Activated B cell treated with CpG ODN at 0.5 μM for 24 hours (primary cell): ENCODE measurements at regions of chr1 and their contacts with region 1.

Region 1: DNA sequence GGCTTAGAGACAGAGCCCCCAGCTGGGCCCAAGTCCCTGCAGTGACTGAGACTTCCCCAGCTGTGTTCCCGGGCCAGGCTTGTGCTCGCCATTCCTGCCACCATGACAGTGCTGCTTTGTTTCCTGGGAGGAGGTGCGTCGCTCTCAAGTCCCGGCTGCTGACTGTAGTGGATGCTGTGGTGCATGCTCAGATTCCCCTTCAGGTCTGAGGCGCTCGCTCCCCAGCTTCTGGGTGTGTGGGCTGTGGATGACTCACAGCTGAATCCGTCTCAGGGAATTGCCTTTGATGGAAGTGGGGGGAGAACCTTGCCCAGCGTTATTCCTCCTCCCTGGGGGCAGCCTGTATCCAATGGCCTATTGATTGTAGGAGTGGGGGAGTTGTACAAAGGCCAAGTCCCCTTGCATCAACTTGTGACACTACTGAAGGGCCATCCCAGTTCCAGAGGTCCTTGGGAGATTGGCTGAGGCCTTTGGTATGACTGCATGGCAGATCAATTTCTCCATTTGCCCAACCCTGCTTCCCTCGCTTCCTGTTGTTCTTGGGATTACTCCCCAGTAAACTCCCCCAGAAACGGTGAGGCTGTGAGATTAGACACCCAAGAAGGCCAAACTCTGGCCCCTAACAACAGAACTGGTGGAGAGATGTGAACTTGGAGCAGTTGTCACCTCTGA is 17.8 kb upstream of the POU3F1 start:
- DNase-seq: no peak
- ATAC-seq: no peak
- H3K4me3 Mint-ChIP-seq: no peak overlapping the region
- H3K27ac Mint-ChIP-seq: no peak overlapping the region
- H3K4me1 Mint-ChIP-seq: peaks cover 34% of the 10 kb centered on the region
- H3K27me3 Mint-ChIP-seq: no peaks in the 10 kb centered on the region
- CTCF ChIP-seq: no peak

Region 2: DNA sequence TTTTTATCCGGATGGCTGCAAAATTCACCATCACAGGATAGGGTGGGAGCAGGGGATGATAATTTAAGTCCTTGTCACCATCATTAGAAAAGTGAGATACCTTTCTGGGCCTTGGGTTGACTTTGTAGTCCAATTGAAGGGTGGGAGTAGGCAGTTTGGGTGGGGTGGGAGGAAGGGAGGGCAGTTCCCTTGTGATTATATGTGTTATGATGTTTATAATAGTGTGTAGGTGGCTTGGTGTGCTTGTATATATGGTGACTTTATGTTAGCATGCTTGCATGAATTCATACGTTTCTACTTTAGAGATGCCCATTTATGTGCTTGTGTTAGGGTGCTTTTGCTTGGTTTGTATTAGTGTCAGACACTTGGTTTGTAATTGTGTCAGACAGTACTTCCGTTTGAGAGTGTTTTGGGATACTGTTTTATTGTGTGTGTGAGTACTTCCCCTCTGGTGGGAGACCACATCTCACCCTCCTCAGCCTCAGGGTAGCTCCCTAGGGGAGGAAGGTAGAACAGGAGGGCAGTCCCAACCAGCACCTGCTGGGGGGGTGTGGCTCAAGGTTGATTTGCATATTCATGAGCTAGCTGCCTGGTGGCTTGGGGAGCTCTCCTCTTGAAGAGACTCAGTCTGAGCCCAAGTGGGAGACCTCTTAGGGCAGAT is 11.5 kb before region 1 on chr1:
- CTCF ChIA-PET with region 1: interaction called, 4 read pairs
- POLR2A ChIA-PET with region 1: interaction called, 19 read pairs
- intact Hi-C with region 1: loop called (anchors 1 kb)
- DNase-seq: peak; percentile 47
- ATAC-seq: peak; percentile 92
- H3K4me3 Mint-ChIP-seq: peak overlapping the region; percentile 26
- H3K27ac Mint-ChIP-seq: peak overlapping the region; percentile 63
- H3K4me1 Mint-ChIP-seq: peaks cover 35% of the 10 kb centered on the region
- H3K27me3 Mint-ChIP-seq: no peaks in the 10 kb centered on the region
- CTCF ChIP-seq: no peak

Region 3: DNA sequence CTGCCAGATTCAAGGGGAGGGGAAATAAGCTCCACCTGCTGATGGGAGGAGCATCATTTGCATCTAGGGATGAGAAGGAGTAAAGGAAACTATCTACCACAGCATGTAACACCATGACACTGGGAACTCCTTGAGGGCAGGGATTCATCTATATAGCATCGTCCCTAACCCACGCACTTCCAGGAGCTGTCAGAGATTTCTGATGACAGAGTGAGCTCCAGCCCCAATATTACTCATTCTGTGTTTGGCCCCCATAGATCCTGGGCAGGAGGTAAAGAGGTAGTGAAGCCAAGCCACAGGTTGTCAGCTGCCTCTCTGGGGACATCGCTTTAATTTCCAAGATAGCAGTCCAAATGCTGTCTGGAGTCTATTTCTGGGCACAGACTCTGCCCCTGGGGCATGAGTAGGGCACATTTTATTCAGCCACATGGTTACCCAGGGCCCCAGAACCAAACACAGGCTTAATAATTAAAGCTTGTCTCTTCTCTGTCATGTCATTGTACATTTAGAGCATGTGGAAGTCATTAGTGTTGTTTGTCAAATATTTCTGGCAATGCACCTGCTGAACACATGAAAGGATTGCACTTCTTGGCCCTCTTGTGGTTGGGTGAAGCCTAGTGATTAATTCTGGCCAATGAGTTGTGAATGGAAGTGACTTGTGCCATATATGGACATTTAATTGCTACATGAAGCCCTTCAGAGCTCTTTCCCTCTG is 88.1 kb after region 1 on chr1:
- CTCF ChIA-PET with region 1: no interaction called
- POLR2A ChIA-PET with region 1: interaction called, 8 read pairs
- intact Hi-C with region 1: loop called (anchors 5 kb)
- DNase-seq: no peak
- ATAC-seq: peak; percentile 74
- H3K4me3 Mint-ChIP-seq: peak overlapping the region; percentile 4
- H3K27ac Mint-ChIP-seq: peak overlapping the region; percentile 80
- H3K4me1 Mint-ChIP-seq: peaks cover 43% of the 10 kb centered on the region
- H3K27me3 Mint-ChIP-seq: no peaks in the 10 kb centered on the region
- CTCF ChIP-seq: no peak